Colonic mucosa (tissue), 4 donors: ENCODE measurements at regions of chr3 and their contacts with region 1.

Region 1: GRCh38 chr3:69306239-69307185 is 79.4 kb downstream of the FRMD4B start:
- DNase-seq: peak; percentile 73
- H3K4me3 ChIP-seq: no peak overlapping the region
- H3K27ac ChIP-seq: no peak overlapping the region
- H3K4me1 ChIP-seq: no peaks in the 10 kb centered on the region
- H3K27me3 ChIP-seq: no peaks in the 10 kb centered on the region
- CTCF ChIP-seq: peak; percentile 83

Region 2: DNA sequence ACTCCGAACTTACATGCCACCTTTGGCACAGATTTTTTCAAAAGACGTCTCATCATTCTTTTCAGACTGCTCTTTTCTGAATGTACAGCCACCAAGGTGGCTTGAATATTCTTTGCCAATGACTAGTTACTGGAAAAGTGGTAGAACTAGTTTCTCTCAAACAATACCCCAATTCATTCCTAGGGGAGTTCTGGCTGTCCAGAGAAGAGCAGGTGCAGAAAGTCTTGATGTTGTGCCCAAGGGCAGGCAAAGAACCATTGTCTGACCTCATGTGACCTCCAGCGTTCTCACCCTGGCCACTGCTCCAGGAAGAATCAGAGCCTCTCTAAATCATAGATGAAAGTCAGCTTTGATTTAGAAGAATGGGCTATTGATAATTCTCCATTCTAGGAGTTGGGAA is 189.6 kb before region 1 on chr3:
- intact Hi-C with region 1: loop called (anchors 5 kb)
- DNase-seq: no peak
- H3K4me3 ChIP-seq: no peak overlapping the region
- H3K27ac ChIP-seq: no peak overlapping the region
- H3K4me1 ChIP-seq: no peaks in the 10 kb centered on the region
- H3K27me3 ChIP-seq: no peaks in the 10 kb centered on the region
- CTCF ChIP-seq: no peak

Region 3: GRCh38 chr3:69161587-69162307 is 144.8 kb before region 1 on chr3:
- intact Hi-C with region 1: loop called (anchors 2 kb)
- DNase-seq: peak; percentile 30
- H3K4me3 ChIP-seq: no peak overlapping the region
- H3K27ac ChIP-seq: no peak overlapping the region
- H3K4me1 ChIP-seq: no peaks in the 10 kb centered on the region
- H3K27me3 ChIP-seq: no peaks in the 10 kb centered on the region
- CTCF ChIP-seq: peak; percentile 95

Region 4: GRCh38 chr3:69410250-69410649 is 103.7 kb after region 1 on chr3:
- intact Hi-C with region 1: loop called (anchors 10 kb)
- DNase-seq: peak; percentile 84
- H3K4me3 ChIP-seq: no peak overlapping the region
- H3K27ac ChIP-seq: no peak overlapping the region
- H3K4me1 ChIP-seq: no peaks in the 10 kb centered on the region
- H3K27me3 ChIP-seq: no peaks in the 10 kb centered on the region
- CTCF ChIP-seq: peak; percentile 75

Region 5: GRCh38 chr3:69510481-69511030 is 204.0 kb after region 1 on chr3:
- intact Hi-C with region 1: no loop called
- DNase-seq: no peak
- H3K4me3 ChIP-seq: no peak overlapping the region
- H3K27ac ChIP-seq: no peak overlapping the region
- H3K4me1 ChIP-seq: no peaks in the 10 kb centered on the region
- H3K27me3 ChIP-seq: no peaks in the 10 kb centered on the region
- CTCF ChIP-seq: no peak

Region 6: GRCh38 chr3:69671082-69671952 is 364.8 kb after region 1 on chr3:
- intact Hi-C with region 1: loop called (anchors 10 kb)
- DNase-seq: peak; percentile 55
- H3K4me3 ChIP-seq: no peak overlapping the region
- H3K27ac ChIP-seq: no peak overlapping the region
- H3K4me1 ChIP-seq: no peaks in the 10 kb centered on the region
- H3K27me3 ChIP-seq: no peaks in the 10 kb centered on the region
- CTCF ChIP-seq: peak; percentile 78